ENCODE measurements at regions of chr6 and their contacts with region 1.

Region 1: DNA sequence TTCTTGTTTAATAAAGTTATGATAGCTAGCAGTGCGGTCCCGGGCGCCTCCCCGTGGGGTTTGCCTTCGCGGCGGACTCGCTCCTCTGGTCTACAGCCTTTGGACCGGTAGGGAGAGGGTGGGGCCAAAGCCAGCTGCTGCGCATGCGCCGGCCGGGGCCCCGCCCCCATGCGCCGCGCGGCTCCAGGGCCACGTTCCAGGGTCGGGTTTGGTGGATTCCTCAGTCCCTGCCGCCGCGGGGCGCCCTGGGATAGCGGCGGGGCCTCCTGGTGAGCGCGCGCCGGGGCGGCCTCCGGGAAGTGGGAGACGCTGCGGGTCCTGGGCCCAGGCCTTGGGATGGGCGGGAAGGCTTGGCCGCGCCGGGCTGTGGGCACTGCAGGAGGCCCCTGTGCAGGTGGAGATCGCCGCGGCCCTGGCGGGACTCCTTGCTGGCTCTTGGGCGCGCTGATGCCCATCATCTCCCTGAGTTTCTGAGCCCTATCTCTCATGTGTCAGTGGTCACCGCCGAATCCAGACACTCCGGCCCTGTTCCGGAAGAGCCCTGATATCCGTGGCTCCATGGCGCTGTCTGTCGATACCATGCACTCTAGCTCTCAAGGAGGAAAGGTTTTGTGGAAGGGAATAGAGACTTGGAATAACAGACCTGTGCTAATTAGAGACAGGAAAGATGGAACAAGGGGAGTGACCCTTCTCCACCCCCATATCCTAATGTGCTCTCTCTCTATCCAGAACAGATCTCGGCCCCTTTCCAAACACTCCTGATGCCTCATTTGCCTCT is at the start of gene VARS2:
- DNase-seq: peak; percentile 95

Region 2: DNA sequence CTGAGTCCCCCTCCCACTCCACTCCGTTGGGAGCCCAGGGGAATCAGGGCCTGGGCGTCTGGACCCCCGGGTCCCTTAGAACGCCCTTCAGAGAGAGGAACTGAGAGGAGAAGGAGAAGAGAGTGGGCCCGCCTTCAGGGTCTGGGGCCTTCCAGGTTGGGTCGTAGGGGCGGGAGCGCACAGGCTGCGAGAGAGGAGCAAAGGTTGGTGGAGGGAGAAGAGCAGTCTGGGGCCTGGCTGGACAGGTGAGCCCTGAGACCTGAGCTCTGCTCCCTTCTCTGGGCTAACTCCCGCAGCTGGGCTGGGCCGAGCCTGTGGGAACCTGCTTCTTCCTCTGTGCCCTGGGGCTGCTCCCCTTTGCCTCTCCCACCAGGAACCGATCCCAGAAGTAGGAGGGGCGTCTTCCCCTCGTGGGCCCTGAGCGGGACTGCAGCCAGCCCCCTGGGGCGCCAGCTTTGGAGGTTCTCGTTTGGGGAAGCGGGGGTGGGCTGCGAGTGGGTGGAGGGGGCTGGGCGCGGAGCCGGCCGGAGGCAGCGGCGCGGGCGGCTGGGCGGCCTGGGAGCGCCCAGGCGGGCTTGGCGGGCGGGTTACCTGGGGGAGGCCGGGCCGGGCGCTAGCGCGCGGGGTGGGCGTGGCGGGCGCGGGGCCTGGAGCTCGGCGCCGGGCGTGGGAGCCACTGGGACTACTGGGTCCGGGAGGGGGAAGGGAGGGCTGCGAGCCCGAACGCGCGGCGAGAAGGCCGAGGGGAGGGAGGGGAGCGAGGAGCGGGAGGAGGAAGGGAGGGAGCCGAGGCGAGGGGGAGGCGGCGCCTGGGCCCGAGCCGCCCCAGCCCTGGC is 30.4 kb before region 1 on chr6 and contains the start of gene DDR1:
- CTCF ChIA-PET with region 1: interaction called, 3 read pairs
- POLR2A ChIA-PET with region 1: interaction called, 10 read pairs
- DNase-seq: peak; percentile 61

Region 3: DNA sequence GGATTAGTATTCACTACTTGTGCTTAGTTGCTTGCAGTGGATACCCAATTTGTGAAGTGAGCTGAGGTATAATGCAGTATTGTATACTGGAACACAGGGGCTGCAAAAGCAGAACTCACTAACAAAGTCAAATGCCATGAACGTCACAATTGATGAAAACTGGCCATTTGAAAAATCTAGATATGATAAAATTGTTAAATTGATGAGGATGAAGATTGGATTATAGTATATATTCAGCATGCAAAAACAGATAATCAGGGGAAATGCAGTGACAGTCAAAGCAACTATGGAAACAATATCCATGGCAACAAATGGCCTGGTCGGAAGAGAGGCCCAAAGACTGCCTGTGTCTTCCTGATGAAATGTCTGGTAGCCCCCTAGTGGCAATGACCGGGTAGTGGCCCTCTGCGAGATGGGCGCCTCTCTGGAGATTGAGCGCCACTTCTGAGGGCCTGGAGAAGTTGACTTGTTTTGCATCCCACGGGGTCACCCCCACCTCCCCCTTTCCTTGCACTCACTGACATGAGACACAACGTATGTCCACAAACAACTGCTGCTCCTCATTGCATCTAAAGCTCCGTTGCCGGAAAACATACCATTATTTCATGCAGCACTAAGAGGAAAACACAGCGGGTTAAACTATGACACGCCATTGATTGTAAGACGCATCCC is 154.5 kb after region 1 on chr6:
- CTCF ChIA-PET with region 1: interaction called, 37 read pairs
- POLR2A ChIA-PET with region 1: no interaction called
- DNase-seq: peak; percentile 85

Region 4: DNA sequence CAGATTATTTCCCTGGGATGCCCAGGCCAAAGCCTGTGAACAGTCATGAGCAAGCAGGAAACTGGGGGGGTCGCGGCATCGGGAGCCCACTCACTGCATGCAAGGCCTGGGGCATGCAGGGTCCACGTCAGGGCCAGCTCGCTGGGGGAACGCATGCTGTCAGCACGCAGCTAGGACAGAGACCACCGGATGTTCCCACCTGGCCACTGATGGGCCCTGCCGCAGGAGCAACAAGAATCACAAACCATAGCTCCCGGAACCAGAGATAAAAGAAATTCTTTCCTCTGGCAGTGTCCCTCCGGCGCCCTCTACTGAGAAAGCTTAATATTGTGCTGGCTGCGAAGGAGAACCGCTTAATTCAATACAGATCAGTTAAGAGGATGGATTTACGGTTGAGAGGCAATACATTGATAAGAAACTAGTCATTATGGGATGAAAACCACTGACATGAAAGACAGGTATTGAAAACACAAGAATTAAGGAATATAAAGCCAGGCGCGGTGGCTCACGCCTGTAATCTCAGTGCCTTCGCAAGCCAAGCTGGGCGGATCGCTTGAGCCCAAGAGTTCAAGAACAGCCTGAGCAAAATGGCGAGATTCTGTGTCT is 165.5 kb after region 1 on chr6:
- CTCF ChIA-PET with region 1: interaction called, 22 read pairs
- POLR2A ChIA-PET with region 1: interaction called, 7 read pairs
- DNase-seq: peak; percentile 66

Region 5: GRCh38 chr6:31087494-31088089 is 173.3 kb after region 1 on chr6:
- CTCF ChIA-PET with region 1: interaction called, 23 read pairs
- POLR2A ChIA-PET with region 1: interaction called, 7 read pairs
- DNase-seq: peak; percentile 84

Region 6: DNA sequence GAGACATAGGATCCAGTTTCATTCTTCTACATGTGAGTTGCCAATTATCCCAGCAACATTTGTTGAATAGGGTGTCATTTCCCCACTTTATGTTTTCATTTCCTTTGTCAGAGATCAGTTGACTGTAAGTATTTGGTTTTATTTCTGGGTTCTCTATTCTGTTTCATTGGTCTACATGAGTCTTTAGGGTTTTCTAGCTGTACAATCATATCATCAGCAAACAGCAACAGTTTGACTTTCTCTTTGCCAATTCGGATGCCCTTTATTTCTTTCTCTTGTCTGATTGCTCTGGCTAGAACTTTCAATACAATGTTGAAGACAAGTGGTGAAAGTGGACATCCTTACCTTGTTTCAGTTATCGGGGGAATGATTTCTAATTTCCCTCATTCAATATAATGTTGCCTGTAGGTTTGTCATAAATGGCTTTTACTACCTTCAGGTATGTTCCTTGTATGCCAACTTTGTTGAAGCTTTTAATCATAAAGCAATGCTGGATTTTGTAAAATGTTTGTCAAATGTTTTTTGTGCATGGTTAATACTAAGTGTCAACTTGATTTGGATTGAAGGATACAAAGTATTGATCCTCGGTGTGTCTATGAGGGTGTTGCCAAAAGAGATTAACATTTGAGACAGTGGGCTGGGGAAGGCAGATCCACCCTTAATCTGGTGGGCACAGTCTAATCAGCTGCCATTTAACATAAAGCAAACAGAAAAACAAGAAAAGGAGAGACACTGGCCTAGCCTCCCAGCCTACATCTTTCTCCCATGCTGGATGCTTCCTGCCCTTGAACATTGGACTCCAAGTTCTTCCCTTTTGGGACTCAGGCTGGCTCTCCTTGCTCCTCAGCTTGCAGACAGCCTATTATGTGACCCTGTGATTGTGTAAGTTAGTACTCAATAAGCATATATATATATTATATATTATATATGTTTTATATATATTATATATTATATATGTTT is 512.4 kb after region 1 on chr6:
- CTCF ChIA-PET with region 1: no interaction called
- POLR2A ChIA-PET with region 1: no interaction called
- DNase-seq: no peak

Measured in HEK293T (cell line).